Activated T-helper 1 cell treated with anti-CD3 and anti-CD28 coated beads, Interleukin-12 subunit alpha, Interleukin-12 subunit beta, Interleukin-2, Interleukin-4 antibody, amounts not matched to agents 30 ng/mL and 10 ng/mL and 1 ng/mL, durations not matched to agents 14 hours and 24 hours and 36 hours (primary cell): ENCODE measurements at regions of chr9 and their contacts with region 1.

Region 1: DNA sequence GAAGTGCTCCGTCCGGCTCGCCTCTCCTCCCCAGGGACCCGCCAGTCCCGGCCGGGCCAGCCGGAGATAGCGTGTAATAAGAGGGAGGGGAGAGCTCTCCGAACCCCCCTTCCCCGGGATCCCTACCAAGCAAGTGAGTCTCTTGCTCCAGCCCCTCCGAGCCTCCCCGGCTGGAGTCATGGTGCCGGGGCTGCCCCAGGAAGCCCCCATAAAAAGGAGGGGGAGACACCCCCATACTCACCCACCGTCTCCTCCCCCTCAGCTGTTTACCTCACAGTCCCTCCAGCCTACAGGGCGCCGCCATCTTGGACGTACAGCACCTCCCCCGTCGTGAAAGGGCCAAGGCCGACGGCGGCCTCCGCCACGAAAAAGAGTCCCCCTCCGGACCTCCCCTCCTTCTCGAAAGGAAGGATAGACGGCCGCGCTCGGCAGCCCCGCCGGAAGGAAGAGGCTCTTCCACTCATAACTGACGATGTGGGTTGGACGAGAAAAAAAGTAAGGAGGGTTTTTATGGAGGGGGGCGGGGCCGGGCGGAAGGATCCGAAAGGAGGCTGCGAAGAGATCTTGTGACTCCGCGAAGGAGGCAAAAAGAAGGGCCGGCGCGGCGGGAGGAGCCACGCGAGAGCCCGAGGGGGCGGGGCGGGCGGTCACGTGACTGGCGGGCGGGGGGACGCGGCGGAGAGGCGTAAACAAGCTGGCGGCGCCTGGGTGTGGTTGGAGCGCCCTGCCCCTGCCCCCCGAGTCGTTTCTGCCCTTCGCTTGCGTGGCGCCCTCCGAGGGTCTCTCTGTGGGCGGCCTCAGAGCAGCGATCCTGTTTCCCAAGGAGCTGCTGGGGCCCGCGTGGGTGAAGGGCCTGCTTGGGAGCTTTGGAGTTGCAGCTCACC is at the start of gene TSC1:
- DNase-seq: peak; percentile 93
- H3K4me3 Mint-ChIP-seq: peak within 1 kb of the TSS; percentile 94
- H3K27ac Mint-ChIP-seq: peak within 1 kb of the TSS; percentile 99
- H3K4me1 Mint-ChIP-seq: peaks cover 23% of the 10 kb centered on the region
- H3K27me3 Mint-ChIP-seq: peaks cover 2% of the 10 kb centered on the region
- total RNA-seq, gene TSC1: 30.2 and 34.8 TPM in 2 replicates

Region 2: DNA sequence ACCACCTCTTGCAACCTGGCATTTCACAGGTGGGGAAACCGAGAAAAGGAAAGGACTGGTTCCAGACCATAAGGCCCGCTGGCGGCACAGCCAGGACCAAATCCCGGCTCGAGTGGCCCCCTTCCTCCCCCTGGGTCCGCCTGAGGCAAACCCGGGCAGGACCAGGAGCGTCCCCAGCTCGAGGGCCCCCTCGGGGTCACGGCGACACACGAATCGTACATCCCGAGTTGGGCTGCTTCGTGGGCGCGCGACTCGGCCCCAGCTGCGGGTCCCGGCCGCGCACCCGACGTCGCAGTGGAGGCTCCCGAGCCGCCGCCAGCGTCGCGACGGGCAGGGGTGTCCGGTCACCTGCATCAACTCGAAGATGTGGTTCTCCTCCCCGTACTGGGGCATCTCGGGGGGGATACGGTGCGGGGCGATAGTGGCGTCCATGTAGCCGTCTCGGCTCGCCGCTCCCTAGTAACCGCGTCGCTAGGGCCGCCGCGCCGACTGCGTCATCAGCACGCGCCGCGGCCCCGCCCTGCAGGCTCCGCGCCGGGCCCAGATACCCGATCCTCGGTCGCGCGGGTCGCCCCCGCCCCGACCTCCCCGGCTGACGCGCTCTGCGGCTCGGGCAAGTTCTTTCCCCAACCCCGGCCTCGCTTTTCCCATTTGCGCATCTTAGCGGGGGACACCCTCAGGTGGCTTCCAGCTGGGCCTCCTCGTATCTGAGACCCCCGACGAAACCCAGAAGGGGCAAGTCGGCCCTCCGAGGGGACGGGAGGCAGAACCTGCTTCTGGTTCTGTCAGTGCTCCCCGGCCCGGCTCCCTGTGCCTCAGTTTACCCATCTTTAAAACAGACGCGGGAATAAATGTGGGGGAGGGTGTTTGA is 66.5 kb before region 1 on chr9 and contains the start of gene AK8:
- intact Hi-C with region 1: loop called (anchors 2 kb)
- DNase-seq: peak; percentile 75
- H3K4me3 Mint-ChIP-seq: peak within 1 kb of the TSS; percentile 84
- H3K27ac Mint-ChIP-seq: peak within 1 kb of the TSS; percentile 68
- H3K4me1 Mint-ChIP-seq: peaks cover 27% of the 10 kb centered on the region
- H3K27me3 Mint-ChIP-seq: peaks cover 9% of the 10 kb centered on the region
- total RNA-seq, gene AK8: not detected in 2 replicates

Region 3: DNA sequence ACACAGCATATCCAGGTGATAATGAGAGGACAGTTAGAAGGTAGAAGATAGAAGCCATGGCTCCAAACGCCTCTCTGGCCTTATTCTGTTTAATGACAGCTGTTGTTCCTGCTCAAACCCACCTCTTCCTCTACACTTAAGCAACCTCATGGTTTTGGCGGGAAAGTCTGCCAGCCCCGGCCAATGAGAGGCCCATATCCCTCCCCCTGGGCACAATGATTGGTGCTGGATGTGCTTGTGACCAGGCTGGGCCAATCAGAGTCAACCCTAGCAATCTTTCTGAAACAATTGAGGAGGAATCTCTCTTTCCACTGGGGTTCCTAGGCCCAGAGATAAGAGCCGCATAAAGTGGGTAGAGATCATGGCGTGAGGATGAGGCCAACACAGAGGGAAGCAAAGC is 29.2 kb after region 1 on chr9:
- intact Hi-C with region 1: no loop called
- DNase-seq: no peak
- H3K4me3 Mint-ChIP-seq: no peak overlapping the region
- H3K27ac Mint-ChIP-seq: no peak overlapping the region
- H3K4me1 Mint-ChIP-seq: peaks cover 4% of the 10 kb centered on the region
- H3K27me3 Mint-ChIP-seq: peaks cover 20% of the 10 kb centered on the region

Region 4: GRCh38 chr9:133023117-133023890 is 78.8 kb after region 1 on chr9:
- intact Hi-C with region 1: loop called (anchors 2 kb)
- DNase-seq: peak; percentile 46
- H3K4me3 Mint-ChIP-seq: peak overlapping the region; percentile 39
- H3K27ac Mint-ChIP-seq: no peak overlapping the region
- H3K4me1 Mint-ChIP-seq: peaks cover 33% of the 10 kb centered on the region
- H3K27me3 Mint-ChIP-seq: peaks cover 4% of the 10 kb centered on the region

Region 5: DNA sequence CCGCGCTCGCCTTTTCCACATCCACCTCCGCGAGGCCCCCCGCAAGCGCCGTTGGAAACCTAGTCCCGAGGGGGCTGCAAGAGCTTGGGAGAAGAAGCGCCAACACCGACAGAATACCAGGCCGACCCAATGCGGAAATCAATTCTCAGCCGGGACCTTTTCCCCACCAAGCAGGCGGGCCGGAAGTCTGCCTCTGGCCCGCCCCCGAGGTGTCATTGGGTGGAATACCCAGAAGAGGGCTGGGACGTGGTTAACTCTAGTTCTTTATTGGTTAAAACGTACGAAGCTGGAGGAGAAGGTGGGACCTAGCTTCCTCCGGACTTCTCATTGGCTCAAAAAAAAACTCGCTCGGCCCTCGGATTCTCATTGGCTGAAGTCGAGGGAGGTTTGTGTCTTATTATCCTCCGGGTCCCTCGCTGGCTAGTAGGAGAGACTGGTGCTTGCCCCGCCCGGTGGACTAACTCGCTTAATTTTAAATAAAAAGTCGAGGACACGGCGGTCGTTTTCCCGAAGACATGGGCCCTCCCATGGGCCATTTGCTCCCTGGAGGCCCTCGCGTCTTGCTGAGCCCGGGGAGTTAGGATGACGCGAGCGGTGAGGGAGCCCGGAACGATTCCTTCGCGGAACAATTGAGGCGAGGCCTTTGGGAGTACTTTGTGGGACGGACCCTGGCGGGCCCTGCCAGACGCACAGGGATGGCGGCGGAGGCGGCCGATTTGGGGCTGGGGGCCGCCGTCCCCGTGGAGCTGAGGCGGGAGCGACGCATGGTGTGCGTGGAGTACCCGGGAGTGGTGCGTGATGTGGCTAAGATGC is 86.0 kb after region 1 on chr9 and contains the start of gene GTF3C5:
- intact Hi-C with region 1: loop called (anchors 1 kb)
- DNase-seq: peak; percentile 91
- H3K4me3 Mint-ChIP-seq: peak within 1 kb of the TSS; percentile 96
- H3K27ac Mint-ChIP-seq: peak within 1 kb of the TSS; percentile 97
- H3K4me1 Mint-ChIP-seq: peaks cover 47% of the 10 kb centered on the region
- H3K27me3 Mint-ChIP-seq: no peaks in the 10 kb centered on the region
- total RNA-seq, gene GTF3C5: 87.8 and 89.0 TPM in 2 replicates